ENCODE measurements at regions of chr22 and their contacts with region 1.

Region 1: DNA sequence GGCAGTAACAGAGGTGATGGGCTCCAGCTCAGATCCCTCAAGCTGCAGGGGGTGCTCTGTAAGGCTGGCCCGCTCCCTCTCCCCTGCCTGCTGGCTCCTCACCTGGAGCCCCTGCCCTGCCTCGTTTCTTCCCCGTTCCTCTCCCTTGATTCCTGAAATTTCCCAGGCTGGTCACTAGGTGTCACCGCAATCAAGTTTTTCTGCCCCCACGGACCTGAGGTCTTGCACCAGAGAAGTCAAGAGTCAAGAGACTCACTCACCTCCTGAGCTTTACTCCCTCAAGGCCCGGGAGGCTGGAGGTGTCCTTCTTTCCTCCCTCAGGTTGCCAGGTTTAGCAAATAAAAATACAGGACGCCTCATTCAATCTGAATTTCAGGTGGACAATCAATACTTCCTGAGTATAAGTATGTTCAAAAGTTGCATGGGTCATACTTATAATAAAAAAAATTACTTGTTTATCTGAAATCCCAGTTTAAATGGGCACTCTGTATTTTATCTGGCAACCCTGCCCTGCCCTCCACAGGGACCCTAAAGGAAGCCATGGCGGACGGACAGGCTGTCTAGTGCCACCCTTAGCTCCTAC is 69.2 kb downstream of the SCUBE1 start:
- DNase-seq: peak in 11 of 14 experiments; percentile 8 to 73 (median 15)
- ATAC-seq: no peak
- H3K4me3 ChIP-seq: no peak overlapping the region
- H3K4me3 Mint-ChIP-seq: no peak overlapping the region
- H3K27ac ChIP-seq: no peak overlapping the region
- H3K27ac Mint-ChIP-seq: no peak overlapping the region
- H3K4me1 ChIP-seq: peaks cover 4% of the 10 kb centered on the region
- H3K4me1 Mint-ChIP-seq: no peaks in the 10 kb centered on the region
- H3K27me3 ChIP-seq: no peaks in the 10 kb centered on the region
- H3K27me3 Mint-ChIP-seq: peaks cover 5% of the 10 kb centered on the region
- CTCF ChIP-seq: peak; percentile 49

Region 2: GRCh38 chr22:43230971-43231723 is 42.8 kb before region 1 on chr22:
- CTCF ChIA-PET with region 1: no interaction called
- POLR2A ChIA-PET with region 1: no interaction called
- intact Hi-C with region 1: loop called in 1 of 2 experiments (anchors 5 kb)
- DNase-seq: peak; percentile 55 to 82 (median 58)
- ATAC-seq: peak; percentile 88
- H3K4me3 ChIP-seq: no peak overlapping the region
- H3K4me3 Mint-ChIP-seq: no peak overlapping the region
- H3K27ac ChIP-seq: no peak overlapping the region
- H3K27ac Mint-ChIP-seq: no peak overlapping the region
- H3K4me1 ChIP-seq: peaks cover 6% of the 10 kb centered on the region
- H3K4me1 Mint-ChIP-seq: peaks cover 5% of the 10 kb centered on the region
- H3K27me3 ChIP-seq: no peaks in the 10 kb centered on the region
- H3K27me3 Mint-ChIP-seq: peaks cover 6% of the 10 kb centered on the region
- CTCF ChIP-seq: peak; percentile 97

Region 3: GRCh38 chr22:43346521-43346929 is 72.5 kb after region 1 on chr22:
- CTCF ChIA-PET with region 1: interaction called, 12 read pairs
- POLR2A ChIA-PET with region 1: interaction called, 5 read pairs
- intact Hi-C with region 1: loop called (anchors 1 to 2 kb)
- DNase-seq: peak; percentile 42 to 77 (median 62)
- ATAC-seq: peak; percentile 62
- H3K4me3 ChIP-seq: no peak overlapping the region
- H3K4me3 Mint-ChIP-seq: no peak overlapping the region
- H3K27ac ChIP-seq: no peak overlapping the region
- H3K27ac Mint-ChIP-seq: no peak overlapping the region
- H3K4me1 ChIP-seq: peaks cover 21% of the 10 kb centered on the region
- H3K4me1 Mint-ChIP-seq: peaks cover 7% of the 10 kb centered on the region
- H3K27me3 ChIP-seq: peaks cover 21 to 23% of the 10 kb centered on the region in 2 experiments
- H3K27me3 Mint-ChIP-seq: peaks cover 69% of the 10 kb centered on the region
- CTCF ChIP-seq: peak; percentile 81

Region 4: GRCh38 chr22:43385770-43386641 is 112.0 kb after region 1 on chr22:
- CTCF ChIA-PET with region 1: no interaction called
- POLR2A ChIA-PET with region 1: no interaction called
- intact Hi-C with region 1: loop called in 1 of 2 experiments (anchors 5 kb)
- DNase-seq: peak; percentile 50 to 85 (median 63)
- ATAC-seq: peak; percentile 92
- H3K4me3 ChIP-seq: no peak overlapping the region
- H3K4me3 Mint-ChIP-seq: no peak overlapping the region
- H3K27ac ChIP-seq: no peak overlapping the region
- H3K27ac Mint-ChIP-seq: no peak overlapping the region
- H3K4me1 ChIP-seq: peaks cover 26% of the 10 kb centered on the region
- H3K4me1 Mint-ChIP-seq: peaks cover 4% of the 10 kb centered on the region
- H3K27me3 ChIP-seq: peaks cover 13 to 14% of the 10 kb centered on the region in 2 experiments
- H3K27me3 Mint-ChIP-seq: peaks cover 30% of the 10 kb centered on the region
- CTCF ChIP-seq: peak; percentile 85

Measured in CD4-positive, alpha-beta T cell (primary cell).